Activated CD8-positive, alpha-beta T cell treated with anti-CD3 and anti-CD28 coated beads, Interleukin-2, amount 10 ng/mL, durations not matched to agents 7 days and 5 days (primary cell): ENCODE measurements at regions of chr14 and their contacts with region 1.

Region 1: DNA sequence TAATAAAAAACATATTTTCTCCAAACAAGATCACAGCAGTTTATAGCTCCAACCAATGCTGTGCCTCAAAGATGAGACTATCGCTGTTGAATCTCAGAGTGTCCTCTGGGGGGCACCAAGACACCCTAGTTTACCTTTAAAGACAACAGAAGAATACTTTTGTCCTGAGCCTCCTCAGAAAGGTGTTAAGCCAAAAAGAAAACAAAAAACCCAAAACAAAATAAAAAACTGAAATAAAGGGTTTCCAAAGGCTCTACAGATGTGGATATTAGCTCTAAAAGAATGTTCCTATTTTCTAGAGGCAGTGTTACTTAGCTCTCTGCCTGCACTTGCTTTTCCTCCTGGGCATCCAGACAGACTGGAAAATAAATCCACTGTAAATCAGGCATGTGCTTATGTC is 86.9 kb upstream of the TTC7B start:
- DNase-seq: peak; percentile 78
- ATAC-seq: peak; percentile 89
- H3K4me3 Mint-ChIP-seq: no peak overlapping the region
- H3K27ac Mint-ChIP-seq: peak overlapping the region; percentile 30
- H3K4me1 Mint-ChIP-seq: peaks cover 27% of the 10 kb centered on the region
- H3K27me3 Mint-ChIP-seq: no peaks in the 10 kb centered on the region

Region 2: DNA sequence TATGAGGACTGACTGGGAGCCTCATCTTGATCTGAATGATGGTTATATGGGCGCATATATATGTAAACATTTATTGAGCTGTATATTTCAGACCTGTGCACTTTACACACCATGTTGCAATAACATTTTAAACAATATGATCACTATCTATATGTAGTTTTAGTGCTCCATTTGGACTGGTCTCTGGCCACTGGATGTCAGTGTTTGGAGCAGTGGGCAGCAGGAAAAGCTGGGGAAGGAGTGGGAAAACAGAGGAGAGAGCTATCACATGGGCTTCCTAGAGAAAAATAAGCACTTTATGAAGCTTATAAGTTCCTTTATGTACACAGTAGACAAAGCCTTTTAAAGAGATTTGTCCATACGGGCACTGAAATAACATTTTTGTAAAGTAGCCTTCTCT is 37.6 kb before region 1 on chr14:
- CTCF ChIA-PET with region 1: interaction called, 10 read pairs
- POLR2A ChIA-PET with region 1: no interaction called
- DNase-seq: no peak
- ATAC-seq: no peak
- H3K4me3 Mint-ChIP-seq: no peak overlapping the region
- H3K27ac Mint-ChIP-seq: no peak overlapping the region
- H3K4me1 Mint-ChIP-seq: no peaks in the 10 kb centered on the region
- H3K27me3 Mint-ChIP-seq: no peaks in the 10 kb centered on the region

Region 3: DNA sequence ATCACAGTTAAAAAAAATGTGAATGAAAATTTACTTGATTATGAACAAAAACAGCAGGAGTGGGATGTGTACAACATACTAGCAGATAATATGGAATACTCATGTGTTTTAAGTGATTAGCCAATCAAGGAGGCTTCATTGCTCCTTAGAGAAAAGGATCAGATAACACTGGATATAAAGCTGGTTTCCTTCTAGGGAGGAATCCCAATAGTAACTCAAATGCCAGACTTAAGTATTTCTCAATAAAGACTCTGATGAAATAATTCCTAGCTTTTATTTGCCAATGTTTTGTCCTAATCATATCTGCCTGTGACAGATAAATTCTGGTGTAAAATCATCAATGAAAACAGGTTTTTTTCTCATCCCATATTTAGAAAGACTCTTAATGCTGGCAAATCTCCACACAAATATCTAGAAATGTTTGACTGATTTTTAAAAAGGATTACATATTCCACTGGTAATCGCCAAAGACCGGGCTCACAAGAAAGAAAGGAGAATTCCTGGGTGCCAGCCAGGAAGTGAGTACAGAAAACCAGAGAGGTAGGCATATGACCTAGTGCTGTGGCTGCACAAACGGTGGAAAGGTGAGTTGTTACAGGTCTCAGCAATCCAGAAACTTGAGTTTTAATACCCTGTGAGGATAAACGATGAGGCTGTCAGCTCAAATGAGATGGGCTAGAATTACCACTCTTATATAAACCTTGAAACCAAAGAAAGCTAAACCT is 21.7 kb after region 1 on chr14:
- CTCF ChIA-PET with region 1: interaction called, 10 read pairs
- POLR2A ChIA-PET with region 1: no interaction called
- DNase-seq: no peak
- ATAC-seq: no peak
- H3K4me3 Mint-ChIP-seq: no peak overlapping the region
- H3K27ac Mint-ChIP-seq: no peak overlapping the region
- H3K4me1 Mint-ChIP-seq: no peaks in the 10 kb centered on the region
- H3K27me3 Mint-ChIP-seq: no peaks in the 10 kb centered on the region

Region 4: DNA sequence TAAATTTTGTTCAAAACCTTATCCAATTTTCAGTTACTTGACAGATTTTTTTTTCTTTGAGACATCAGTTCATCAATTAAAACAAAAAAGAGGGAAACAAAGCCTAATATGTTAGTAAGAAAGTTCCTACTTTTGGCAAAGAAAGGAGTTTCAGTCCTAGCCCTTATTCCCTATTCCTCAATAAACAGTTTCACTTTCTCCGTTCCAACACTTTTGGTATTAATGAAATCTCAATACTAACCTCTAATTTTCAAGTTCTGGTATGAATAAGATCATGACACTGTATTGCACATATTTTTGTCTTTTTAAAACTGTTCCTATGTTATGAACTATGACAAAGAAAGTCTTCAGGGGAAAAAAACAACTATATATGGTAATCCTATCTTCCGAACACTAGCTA is 108.9 kb after region 1 on chr14:
- CTCF ChIA-PET with region 1: interaction called, 11 read pairs
- POLR2A ChIA-PET with region 1: interaction called, 3 read pairs
- DNase-seq: no peak
- ATAC-seq: no peak
- H3K4me3 Mint-ChIP-seq: no peak overlapping the region
- H3K27ac Mint-ChIP-seq: no peak overlapping the region
- H3K4me1 Mint-ChIP-seq: peaks cover 44% of the 10 kb centered on the region
- H3K27me3 Mint-ChIP-seq: no peaks in the 10 kb centered on the region

Region 5: DNA sequence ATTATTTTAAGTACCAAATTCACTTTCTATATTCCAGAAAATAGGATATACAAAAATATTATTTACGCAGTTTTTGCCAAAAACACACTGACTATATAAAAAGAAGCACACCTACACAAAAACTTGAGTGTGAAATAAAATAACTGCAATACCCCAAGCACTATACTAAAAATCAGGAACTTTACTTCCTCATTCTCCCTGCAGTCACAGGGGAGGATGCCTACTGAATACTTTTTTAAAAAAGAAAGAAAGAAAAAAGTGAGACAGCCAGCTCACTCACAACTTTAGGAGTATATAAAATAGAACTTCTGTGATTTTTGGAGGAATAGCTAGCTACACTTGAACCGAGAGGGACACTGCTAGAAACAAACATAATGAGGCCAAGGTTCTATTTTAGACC is 145.2 kb after region 1 on chr14:
- CTCF ChIA-PET with region 1: interaction called, 10 read pairs
- POLR2A ChIA-PET with region 1: interaction called, 3 read pairs
- DNase-seq: no peak
- ATAC-seq: no peak
- H3K4me3 Mint-ChIP-seq: no peak overlapping the region
- H3K27ac Mint-ChIP-seq: no peak overlapping the region
- H3K4me1 Mint-ChIP-seq: peaks cover 60% of the 10 kb centered on the region
- H3K27me3 Mint-ChIP-seq: no peaks in the 10 kb centered on the region

Region 6: DNA sequence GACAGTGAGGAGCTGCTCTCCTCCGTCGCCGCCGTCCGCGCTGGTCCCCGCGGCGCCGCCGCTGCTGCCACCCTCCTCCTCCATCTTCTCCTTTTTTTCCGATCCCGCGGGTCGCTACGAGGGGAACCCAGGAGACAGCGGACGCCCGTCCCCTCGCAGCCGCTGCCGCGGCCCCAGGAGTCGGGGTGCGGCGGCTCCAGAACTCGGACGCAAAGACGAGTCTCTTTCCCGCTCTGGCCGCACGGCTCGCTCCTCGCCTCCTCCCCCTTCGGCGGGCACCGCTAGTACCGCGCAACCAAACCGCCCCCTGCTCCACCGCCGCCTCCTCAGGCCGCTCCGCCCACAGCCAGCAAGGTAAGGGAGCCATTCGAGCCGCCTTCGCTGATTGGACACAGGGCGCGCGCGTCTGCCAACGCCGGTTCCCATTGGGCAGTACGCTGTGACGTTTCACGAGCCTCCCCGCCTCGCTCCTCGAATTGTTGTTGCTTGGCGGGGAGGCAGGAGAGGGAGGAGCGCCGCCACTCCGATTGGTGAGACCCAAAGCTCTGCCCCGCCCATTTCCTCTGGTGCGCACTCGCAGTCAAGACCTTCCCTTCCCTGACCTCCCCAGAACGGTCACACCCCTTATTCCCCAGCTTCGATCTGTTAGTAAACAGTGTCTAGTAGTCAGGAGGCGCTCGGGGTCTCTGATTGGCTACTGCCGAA is 157.4 kb after region 1 on chr14 and contains the start of gene RPS6KA5:
- CTCF ChIA-PET with region 1: interaction called, 7 read pairs
- POLR2A ChIA-PET with region 1: interaction called, 11 read pairs
- DNase-seq: peak; percentile 100
- ATAC-seq: peak; percentile 85
- H3K4me3 Mint-ChIP-seq: peak within 1 kb of the TSS; percentile 90
- H3K27ac Mint-ChIP-seq: peak within 1 kb of the TSS; percentile 65
- H3K4me1 Mint-ChIP-seq: peaks cover 62% of the 10 kb centered on the region
- H3K27me3 Mint-ChIP-seq: no peaks in the 10 kb centered on the region
- total RNA-seq, gene RPS6KA5: 50.8 to 53.1 TPM

Region 7: DNA sequence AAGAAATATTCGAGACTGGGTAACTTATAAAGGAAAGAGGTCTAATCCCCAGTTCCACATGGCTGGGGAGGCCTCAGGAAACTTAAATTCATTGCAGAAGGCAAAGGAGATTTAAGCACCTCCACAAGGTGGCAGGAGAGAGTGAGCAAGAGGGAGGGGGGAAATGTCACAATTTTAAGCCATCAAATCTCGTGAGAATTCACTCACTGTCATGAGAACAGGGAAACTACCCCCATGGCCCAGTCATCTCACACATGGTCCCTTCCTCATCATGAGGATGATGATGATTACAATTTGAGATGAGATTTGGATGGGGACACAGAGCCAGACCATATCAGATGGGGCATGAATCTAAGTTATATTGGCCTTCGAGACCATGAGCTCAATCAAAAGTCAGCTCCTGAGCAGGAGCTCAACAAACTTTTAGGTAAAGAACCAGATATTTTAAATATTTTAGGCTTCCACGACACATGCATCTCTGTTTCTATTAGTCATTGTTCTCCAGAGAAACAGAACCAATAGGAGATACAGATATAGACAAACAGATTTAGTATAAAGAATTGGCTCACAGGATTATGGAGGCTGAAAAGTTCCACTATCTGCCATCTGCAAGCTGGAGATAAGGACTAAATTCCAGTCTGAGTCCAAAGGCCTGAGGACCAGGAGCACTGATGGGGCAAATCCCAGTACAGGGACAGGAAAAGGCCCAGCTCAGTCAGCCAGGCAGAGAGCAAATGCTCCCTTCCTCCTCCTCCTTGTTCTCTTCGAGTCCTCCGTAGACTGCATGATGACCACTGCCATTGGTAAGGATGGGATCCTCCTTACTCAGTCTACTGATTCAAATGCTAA is 235.6 kb after region 1 on chr14:
- CTCF ChIA-PET with region 1: interaction called, 16 read pairs
- POLR2A ChIA-PET with region 1: no interaction called
- DNase-seq: peak; percentile 71
- ATAC-seq: peak; percentile 38
- H3K4me3 Mint-ChIP-seq: no peak overlapping the region
- H3K27ac Mint-ChIP-seq: peak overlapping the region; percentile 23
- H3K4me1 Mint-ChIP-seq: peaks cover 63% of the 10 kb centered on the region
- H3K27me3 Mint-ChIP-seq: no peaks in the 10 kb centered on the region